ENCODE measurements at regions of chr10 and their contacts with region 1.

Region 1: GRCh38 chr10:106705681-106706100 is 458.8 kb downstream of the SORCS1 start:
- H3K4me3 ChIP-seq: no peak overlapping the region
- H3K27ac ChIP-seq: no peak overlapping the region
- H3K4me1 ChIP-seq: no peaks in the 10 kb centered on the region
- CTCF ChIP-seq: no peak

Region 2: GRCh38 chr10:106795619-106796018 is 89.9 kb after region 1 on chr10:
- CTCF ChIA-PET with region 1: interaction called, 11 read pairs
- POLR2A ChIA-PET with region 1: no interaction called
- H3K4me3 ChIP-seq: no peak overlapping the region
- H3K27ac ChIP-seq: no peak overlapping the region
- H3K4me1 ChIP-seq: no peaks in the 10 kb centered on the region
- CTCF ChIP-seq: no peak